ENCODE measurements at regions of chr5 and their contacts with region 1.

Region 1: GRCh38 chr5:87944553-87945285 is 323.9 kb downstream of the TMEM161B start:
- DNase-seq: peak; percentile 67 to 97 (median 82)

Region 2: DNA sequence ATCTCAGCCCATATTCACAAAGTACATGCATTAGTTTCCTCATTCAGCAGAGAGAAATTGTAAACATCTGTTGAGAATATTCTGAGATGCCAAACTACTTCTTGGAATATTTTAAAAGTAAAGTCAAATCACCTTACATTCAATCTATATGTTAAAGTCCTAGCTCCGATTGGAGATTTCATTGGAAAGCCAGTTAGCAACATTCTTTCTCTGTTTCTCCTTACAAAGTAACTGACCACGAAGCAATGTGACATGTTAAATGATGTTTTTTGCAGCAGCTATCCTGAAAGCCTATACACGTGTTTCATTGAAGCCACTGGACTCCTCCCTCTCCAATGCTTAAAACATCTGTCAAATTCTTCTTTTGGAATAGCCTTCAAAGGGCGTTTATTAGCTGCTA is 152.8 kb before region 1 on chr5:
- intact Hi-C with region 1: no loop called
- DNase-seq: no peak

Region 3: GRCh38 chr5:88045931-88046461 is 101.3 kb after region 1 on chr5:
- intact Hi-C with region 1: loop called (anchors 5 kb)
- DNase-seq: peak in 5 of 10 donors; percentile 7 to 23 (median 16)